MCF 10A (cell line): ENCODE measurements at regions of chr20 and their contacts with region 1.

Region 1: DNA sequence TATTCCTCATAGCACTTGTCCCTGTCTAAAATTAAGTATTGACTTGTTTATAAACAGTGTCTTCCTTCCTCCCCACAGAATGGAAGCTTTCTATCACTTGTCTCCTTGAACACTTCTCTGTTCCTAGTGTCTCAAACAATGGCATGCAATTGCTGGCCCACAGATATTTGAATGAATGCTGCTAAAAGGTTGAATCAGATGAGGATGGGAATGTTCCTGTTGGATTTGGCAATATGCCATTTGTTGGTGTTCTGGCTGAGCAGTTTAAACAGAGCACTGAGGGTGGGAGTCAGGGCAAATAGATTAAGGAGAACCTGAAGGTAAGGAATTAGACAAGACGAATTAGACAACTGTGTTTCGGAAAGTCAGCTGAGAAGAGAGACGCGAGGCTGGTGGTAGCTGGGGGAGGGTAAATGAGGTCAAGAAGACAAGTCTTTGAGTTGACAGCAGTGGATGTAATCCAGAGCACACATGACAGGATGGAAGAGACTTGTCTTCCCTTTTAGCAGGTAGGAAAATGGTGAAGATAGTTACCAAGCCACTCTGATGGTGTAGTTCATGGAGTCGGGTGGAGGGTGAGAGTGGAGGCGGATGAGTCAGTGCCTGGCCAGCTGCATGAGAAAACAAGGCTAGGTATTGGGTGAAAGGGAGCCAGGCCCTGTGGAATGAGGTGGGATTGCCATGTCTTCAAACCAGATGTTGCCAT is 58.3 kb upstream of the GNRH2 start:
- DNase-seq: peak; percentile 55
- H3K4me3 Mint-ChIP-seq: no peak overlapping the region
- H3K27ac Mint-ChIP-seq: no peak overlapping the region
- H3K4me1 Mint-ChIP-seq: peaks cover 9% of the 10 kb centered on the region
- H3K27me3 Mint-ChIP-seq: no peaks in the 10 kb centered on the region
- CTCF ChIP-seq: no peak

Region 2: DNA sequence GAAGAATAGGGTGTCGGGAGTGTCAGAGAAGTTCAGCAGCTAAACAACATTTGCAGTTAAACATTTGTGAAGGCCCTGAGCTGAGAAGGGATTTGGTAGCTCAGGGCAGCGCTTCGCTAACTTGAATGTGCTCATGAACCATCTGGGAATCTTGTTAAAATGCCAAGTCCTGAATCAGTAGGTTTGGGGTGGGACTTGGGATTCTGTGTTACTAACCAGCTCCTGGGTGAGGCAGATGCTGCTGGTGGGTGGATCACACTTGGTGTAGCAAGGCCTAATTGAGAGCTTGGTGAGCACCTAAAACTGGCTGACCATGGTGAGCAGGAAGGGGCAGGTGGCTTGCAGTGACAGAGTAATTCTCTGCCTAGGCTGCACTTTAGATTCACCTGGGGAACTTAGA is 106.0 kb before region 1 on chr20:
- CTCF ChIA-PET with region 1: interaction called, 5 read pairs
- POLR2A ChIA-PET with region 1: no interaction called
- intact Hi-C with region 1: loop called (anchors 5 kb)
- DNase-seq: peak; percentile 66
- H3K4me3 Mint-ChIP-seq: no peak overlapping the region
- H3K27ac Mint-ChIP-seq: peak overlapping the region; percentile 26
- H3K4me1 Mint-ChIP-seq: peaks cover 29% of the 10 kb centered on the region
- H3K27me3 Mint-ChIP-seq: no peaks in the 10 kb centered on the region
- CTCF ChIP-seq: no peak

Region 3: GRCh38 chr20:2942439-2942838 is 42.7 kb before region 1 on chr20:
- CTCF ChIA-PET with region 1: no interaction called
- POLR2A ChIA-PET with region 1: no interaction called
- intact Hi-C with region 1: no loop called
- DNase-seq: no peak
- H3K4me3 Mint-ChIP-seq: no peak overlapping the region
- H3K27ac Mint-ChIP-seq: no peak overlapping the region
- H3K4me1 Mint-ChIP-seq: no peaks in the 10 kb centered on the region
- H3K27me3 Mint-ChIP-seq: no peaks in the 10 kb centered on the region
- CTCF ChIP-seq: no peak